Heart left ventricle (tissue), 16 donors: ENCODE measurements at regions of chr5 and their contacts with region 1.

Region 1: GRCh38 chr5:62779010-62779422 is 200.4 kb downstream of the LRRC70 start:
- DNase-seq: peak in 1 of 5 donors; percentile 17
- ATAC-seq: peak in 3 of 4 donors; percentile 73 to 84 (median 77)
- H3K4me3 ChIP-seq: no peak overlapping the region
- H3K27ac ChIP-seq: no peak overlapping the region
- H3K4me1 ChIP-seq: peaks cover 0 to 4% (median 0%) of the 10 kb centered on the region in 12 donors
- H3K27me3 ChIP-seq: no peaks in the 10 kb centered on the region
- CTCF ChIP-seq: peak; percentile 57 to 84 (median 73)
- POLR2A ChIP-seq: no peak

Region 2: GRCh38 chr5:62460578-62460983 is 318.4 kb before region 1 on chr5:
- intact Hi-C with region 1: loop called (anchors 1 to 5 kb)
- DNase-seq: no peak
- ATAC-seq: peak in 1 of 4 donors; percentile 49
- H3K4me3 ChIP-seq: no peak overlapping the region
- H3K27ac ChIP-seq: no peak overlapping the region
- H3K4me1 ChIP-seq: peaks cover 0 to 5% (median 0%) of the 10 kb centered on the region in 12 donors
- H3K27me3 ChIP-seq: no peaks in the 10 kb centered on the region
- CTCF ChIP-seq: peak; percentile 63 to 91 (median 77)
- POLR2A ChIP-seq: no peak

Region 3: GRCh38 chr5:62465985-62466925 is 312.8 kb before region 1 on chr5:
- intact Hi-C with region 1: loop called in 8 of 10 experiments (anchors 2 to 5 kb)
- DNase-seq: no peak
- ATAC-seq: no peak
- H3K4me3 ChIP-seq: no peak overlapping the region
- H3K27ac ChIP-seq: no peak overlapping the region
- H3K4me1 ChIP-seq: peaks cover 0 to 18% (median 3%) of the 10 kb centered on the region in 12 donors
- H3K27me3 ChIP-seq: no peaks in the 10 kb centered on the region
- CTCF ChIP-seq: no peak
- POLR2A ChIP-seq: no peak

Region 4: DNA sequence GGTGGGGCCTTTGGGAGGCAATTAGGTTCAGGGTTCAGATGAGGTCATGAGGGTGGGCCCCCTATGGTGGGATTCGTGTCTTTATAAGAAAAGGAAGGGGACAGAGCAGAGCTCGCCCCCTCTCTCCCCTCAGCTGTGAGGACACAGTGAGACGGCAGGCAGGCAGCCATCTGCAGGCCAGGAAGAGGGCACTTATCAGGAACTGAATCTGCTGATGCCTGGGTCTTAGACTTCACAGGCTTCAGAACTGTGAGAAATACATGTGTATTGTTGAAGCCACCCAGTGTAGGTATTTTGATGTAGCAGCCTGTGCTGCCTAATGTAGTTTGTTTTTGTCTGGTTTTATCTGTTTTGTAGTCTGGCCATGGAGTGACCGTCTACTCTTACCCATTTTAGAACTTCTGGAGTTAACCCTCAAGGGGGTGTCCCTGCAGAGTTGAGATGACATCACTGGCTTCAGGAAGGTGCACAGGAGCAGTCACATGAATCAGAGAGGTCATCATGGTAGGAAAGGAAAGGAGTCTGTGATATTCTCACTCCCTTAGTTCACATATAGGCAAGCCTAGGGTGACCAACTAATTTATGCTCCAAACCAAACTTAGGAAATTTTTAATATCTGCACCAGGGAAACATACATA is 129.4 kb before region 1 on chr5:
- intact Hi-C with region 1: no loop called
- DNase-seq: peak in 1 of 5 donors; percentile 44
- ATAC-seq: peak in 1 of 4 donors; percentile 21
- H3K4me3 ChIP-seq: no peak overlapping the region
- H3K27ac ChIP-seq: no peak overlapping the region
- H3K4me1 ChIP-seq: peaks cover 0 to 16% (median 0%) of the 10 kb centered on the region in 12 donors
- H3K27me3 ChIP-seq: no peaks in the 10 kb centered on the region
- CTCF ChIP-seq: no peak
- POLR2A ChIP-seq: no peak